ENCODE measurements at regions of chr6 and their contacts with region 1.

Region 1: DNA sequence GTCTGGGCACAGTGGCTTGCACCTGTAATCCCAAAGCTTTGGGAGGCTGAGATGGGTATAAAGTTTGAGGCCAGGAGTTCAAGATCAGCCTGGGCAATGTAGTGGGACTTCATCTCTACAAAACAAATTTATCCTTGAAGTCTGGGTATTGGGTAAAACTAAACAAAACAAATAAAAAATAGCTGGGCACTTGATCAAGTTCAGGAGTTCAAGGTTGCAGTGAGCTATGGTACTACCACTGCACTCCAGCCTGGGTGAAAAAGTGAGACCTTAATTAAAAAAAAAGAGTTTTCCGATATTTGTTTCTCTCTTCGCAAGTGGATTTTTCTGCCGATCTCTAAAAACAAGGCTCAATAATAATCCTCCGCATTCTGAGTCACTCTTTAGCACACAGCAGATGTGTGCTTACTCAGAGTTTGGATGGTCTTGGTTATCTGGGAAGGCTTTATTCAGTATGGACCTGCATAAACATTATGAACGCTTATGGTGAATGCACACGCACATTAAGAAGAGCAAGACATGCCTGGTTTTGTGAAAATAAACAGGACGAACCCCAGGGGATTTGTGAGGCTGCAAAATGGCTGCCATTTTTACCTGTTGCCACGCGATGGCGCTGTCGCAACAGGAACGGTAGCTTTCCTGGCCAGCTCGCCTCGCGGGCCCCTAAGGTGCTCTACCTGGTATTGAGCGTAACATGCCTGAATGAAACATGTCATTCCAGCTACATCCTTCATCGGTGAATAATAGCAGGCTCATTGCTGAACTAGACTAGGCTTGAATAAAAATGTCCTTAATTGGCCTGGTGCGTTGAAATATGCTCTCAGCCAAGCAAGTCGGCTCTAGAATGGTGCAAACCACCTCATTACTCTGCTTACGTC is 6.0 kb downstream of the OPN5 start:
- DNase-seq: peak; percentile 71 to 80 (median 78)
- ATAC-seq: peak; percentile 98
- H3K4me3 ChIP-seq: no peak overlapping the region
- H3K27ac ChIP-seq: no peak overlapping the region
- H3K4me1 ChIP-seq: no peaks in the 10 kb centered on the region
- H3K27me3 ChIP-seq: no peaks in the 10 kb centered on the region
- CTCF ChIP-seq: peak; percentile 87 to 97 (median 94)
- EP300 ChIP-seq: no peak
- POLR2A ChIP-seq: no peak
- RAD21 ChIP-seq: peak; percentile 92 to 97

Region 2: DNA sequence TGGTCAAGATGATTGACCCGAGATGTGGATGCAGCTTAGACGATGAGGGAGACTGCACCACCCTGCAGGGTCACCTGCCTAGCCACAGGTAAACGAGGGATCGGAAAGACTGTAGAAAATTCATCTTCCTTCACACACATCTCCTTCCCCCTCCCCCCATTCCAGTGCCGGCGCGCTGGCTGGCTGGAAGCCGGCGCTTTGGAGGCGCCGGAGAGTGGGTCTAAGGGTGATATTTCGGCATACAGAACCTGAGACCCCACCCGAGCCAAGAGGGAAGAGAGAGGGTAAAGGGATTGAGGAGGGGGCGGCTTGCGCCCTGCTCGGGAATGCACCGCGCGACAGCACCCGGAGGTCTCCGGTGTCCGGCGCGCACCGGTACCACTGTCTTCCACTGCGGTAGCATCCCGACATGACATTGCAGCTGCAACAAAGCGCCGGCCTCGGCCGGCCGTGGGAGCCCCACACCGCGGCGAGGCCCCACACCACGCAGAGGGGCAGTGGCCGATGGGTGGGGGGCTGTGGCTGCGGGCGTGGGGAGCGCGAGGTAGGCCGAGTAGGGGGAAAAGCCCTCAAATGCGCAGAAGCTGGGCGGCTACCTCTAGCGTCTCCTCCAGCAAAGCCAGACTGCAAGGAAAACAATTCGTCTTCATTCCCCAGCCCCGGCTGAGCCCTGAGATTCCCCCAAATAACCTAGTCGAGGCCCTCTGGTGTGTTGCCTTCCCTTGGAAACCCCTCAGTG is 479.1 kb before region 1 on chr6:
- CTCF ChIA-PET with region 1: no interaction called
- POLR2A ChIA-PET with region 1: no interaction called
- in situ Hi-C with region 1: no loop called
- intact Hi-C with region 1: no loop called
- DNase-seq: peak; percentile 27 to 42 (median 30)
- ATAC-seq: peak; percentile 53
- H3K4me3 ChIP-seq: peak overlapping the region; percentile 61
- H3K27ac ChIP-seq: no peak overlapping the region
- H3K4me1 ChIP-seq: peaks cover 0 to 15% of the 10 kb centered on the region in 2 experiments; a peak in 3 of 5 replicates
- H3K27me3 ChIP-seq: peaks cover 11 to 15% of the 10 kb centered on the region in 2 experiments
- CTCF ChIP-seq: no peak
- EP300 ChIP-seq: no peak
- POLR2A ChIP-seq: no peak
- RAD21 ChIP-seq: no peak

Region 3: DNA sequence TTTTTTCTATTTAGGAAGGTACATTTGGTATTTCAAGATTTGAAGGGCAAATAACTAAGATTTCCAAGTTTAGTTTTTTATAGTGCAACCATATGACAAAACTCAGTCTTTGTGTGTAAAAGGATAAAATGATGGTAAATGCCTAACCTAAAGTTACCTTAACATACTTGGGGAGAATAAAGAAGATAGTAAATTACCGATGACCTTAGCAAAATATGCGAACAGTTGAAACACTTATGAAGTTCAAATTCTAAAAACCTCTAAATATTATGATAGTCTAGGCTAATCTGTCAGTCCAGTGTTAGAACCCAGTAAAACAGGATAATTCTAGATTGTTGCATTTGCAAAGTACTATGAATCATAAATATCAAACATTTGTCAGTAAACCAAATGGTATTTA is 195.6 kb after region 1 on chr6:
- CTCF ChIA-PET with region 1: no interaction called
- POLR2A ChIA-PET with region 1: no interaction called
- in situ Hi-C with region 1: no loop called
- intact Hi-C with region 1: no loop called
- DNase-seq: no peak
- ATAC-seq: no peak
- H3K4me3 ChIP-seq: no peak overlapping the region
- H3K27ac ChIP-seq: no peak overlapping the region
- H3K4me1 ChIP-seq: no peaks in the 10 kb centered on the region
- H3K27me3 ChIP-seq: no peaks in the 10 kb centered on the region
- CTCF ChIP-seq: no peak
- EP300 ChIP-seq: no peak
- POLR2A ChIP-seq: no peak
- RAD21 ChIP-seq: no peak

Region 4: DNA sequence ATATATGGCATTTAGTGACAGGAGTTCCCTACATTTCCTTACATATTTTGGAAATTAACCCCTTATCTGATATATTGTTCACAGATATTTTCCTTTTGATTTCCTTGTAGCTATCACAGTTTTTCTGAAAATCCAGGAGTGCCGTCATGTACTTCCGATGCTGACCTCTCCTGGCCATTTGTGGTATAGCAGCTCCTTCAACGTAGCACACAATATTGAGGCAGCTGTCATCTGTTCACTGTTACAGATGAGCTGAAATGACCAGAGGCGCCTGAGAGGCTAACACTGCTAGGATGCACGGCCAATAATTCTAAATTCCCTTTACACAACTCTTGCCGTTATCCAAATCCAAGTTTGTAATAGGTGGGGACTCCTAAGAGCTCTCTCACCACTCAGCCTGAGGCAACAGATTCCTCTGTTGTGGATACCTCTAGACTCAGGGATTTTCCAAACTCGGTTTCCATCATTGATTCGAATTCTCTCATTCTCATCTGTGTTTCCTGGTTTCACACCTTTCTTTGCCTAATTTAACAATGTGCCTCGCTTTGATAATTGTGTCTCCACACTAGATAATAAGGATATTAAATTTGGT is 1622.2 kb after region 1 on chr6:
- CTCF ChIA-PET with region 1: no interaction called
- POLR2A ChIA-PET with region 1: no interaction called
- in situ Hi-C with region 1: no loop called
- intact Hi-C with region 1: loop called (anchors 1 kb)
- DNase-seq: peak; percentile 57 to 80 (median 66)
- ATAC-seq: peak; percentile 94
- H3K4me3 ChIP-seq: no peak overlapping the region
- H3K27ac ChIP-seq: no peak overlapping the region
- H3K4me1 ChIP-seq: no peaks in the 10 kb centered on the region
- H3K27me3 ChIP-seq: no peaks in the 10 kb centered on the region
- CTCF ChIP-seq: peak; percentile 74 to 83 (median 82)
- EP300 ChIP-seq: no peak
- POLR2A ChIP-seq: no peak
- RAD21 ChIP-seq: peak; percentile 69 to 82

Region 5: GRCh38 chr6:49423817-49424216 is 1636.0 kb after region 1 on chr6:
- CTCF ChIA-PET with region 1: interaction called, 3 read pairs
- POLR2A ChIA-PET with region 1: no interaction called
- in situ Hi-C with region 1: loop called (anchors 10 kb)
- intact Hi-C with region 1: no loop called
- DNase-seq: no peak
- ATAC-seq: 0 out of 3 replicates have a peak, but pooled peaks have one; percentile 37
- H3K4me3 ChIP-seq: no peak overlapping the region
- H3K27ac ChIP-seq: no peak overlapping the region
- H3K4me1 ChIP-seq: no peaks in the 10 kb centered on the region
- H3K27me3 ChIP-seq: no peaks in the 10 kb centered on the region
- CTCF ChIP-seq: peak in 1 of 3 experiments; percentile 37; a peak in 1 of 6 replicates
- EP300 ChIP-seq: no peak
- POLR2A ChIP-seq: no peak
- RAD21 ChIP-seq: peak; percentile 36 to 67

Region 6: GRCh38 chr6:49618257-49618656 is 1830.4 kb after region 1 on chr6:
- CTCF ChIA-PET with region 1: no interaction called
- POLR2A ChIA-PET with region 1: no interaction called
- in situ Hi-C with region 1: no loop called
- intact Hi-C with region 1: loop called (anchors 10 kb)
- DNase-seq: no peak
- ATAC-seq: no peak
- H3K4me3 ChIP-seq: no peak overlapping the region
- H3K27ac ChIP-seq: no peak overlapping the region
- H3K4me1 ChIP-seq: no peaks in the 10 kb centered on the region; a peak in 1 of 5 replicates
- H3K27me3 ChIP-seq: no peaks in the 10 kb centered on the region
- CTCF ChIP-seq: no peak
- EP300 ChIP-seq: no peak
- POLR2A ChIP-seq: 0 out of 2 replicates have a peak, but pooled peaks have one; percentile 36
- RAD21 ChIP-seq: no peak